ENCODE measurements at regions of chr20 and their contacts with region 1.

Region 1: DNA sequence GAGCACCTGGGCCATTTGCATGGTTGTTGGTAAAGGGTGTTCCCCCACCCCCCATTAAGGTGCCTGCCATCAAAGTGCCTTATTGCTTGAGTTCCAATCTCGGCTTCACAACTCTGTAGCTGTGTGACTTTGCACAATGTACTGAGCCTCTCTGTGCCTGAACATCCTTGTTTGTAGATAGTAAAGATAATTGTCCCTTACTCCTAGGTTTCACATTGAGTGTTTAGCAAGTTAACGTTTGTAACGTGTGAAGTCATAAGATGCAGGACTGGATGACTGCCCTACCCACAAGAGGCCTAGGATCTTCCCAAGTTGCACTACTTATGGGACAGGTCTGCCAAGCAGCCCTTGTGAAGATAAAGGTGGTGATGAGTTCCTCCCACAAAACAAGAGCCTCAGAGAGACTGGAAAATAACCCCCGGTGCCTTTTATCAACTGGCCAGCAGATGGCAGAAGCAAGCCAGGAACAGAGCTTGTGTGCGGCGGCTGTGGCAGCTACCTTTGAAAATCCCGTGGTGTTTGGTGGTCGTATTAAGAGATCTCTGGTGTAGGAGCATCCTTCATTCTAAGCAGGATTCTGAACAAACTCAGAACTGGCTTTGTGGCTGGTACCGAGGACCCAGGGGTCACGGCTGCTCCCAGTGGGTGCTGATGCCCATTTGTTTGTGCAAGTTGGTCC is 99.0 kb downstream of the CDH26 start:
- DNase-seq: peak; percentile 29 to 81 (median 56)
- ATAC-seq: peak; percentile 48 to 59 (median 55)
- H3K4me3 ChIP-seq: peak overlapping the region in 1 of 2 donors; percentile 27
- H3K4me3 Mint-ChIP-seq: peak overlapping the region; percentile 15 to 75 (median 39)
- H3K27ac ChIP-seq: peak overlapping the region; percentile 49
- H3K27ac Mint-ChIP-seq: peak overlapping the region; percentile 79 to 86
- H3K4me1 ChIP-seq: peaks cover 34 to 63% of the 10 kb centered on the region in 2 experiments
- H3K4me1 Mint-ChIP-seq: peaks cover 47 to 70% (median 54%) of the 10 kb centered on the region in 3 donors
- H3K27me3 ChIP-seq: no peaks in the 10 kb centered on the region
- H3K27me3 Mint-ChIP-seq: no peaks in the 10 kb centered on the region

Region 2: DNA sequence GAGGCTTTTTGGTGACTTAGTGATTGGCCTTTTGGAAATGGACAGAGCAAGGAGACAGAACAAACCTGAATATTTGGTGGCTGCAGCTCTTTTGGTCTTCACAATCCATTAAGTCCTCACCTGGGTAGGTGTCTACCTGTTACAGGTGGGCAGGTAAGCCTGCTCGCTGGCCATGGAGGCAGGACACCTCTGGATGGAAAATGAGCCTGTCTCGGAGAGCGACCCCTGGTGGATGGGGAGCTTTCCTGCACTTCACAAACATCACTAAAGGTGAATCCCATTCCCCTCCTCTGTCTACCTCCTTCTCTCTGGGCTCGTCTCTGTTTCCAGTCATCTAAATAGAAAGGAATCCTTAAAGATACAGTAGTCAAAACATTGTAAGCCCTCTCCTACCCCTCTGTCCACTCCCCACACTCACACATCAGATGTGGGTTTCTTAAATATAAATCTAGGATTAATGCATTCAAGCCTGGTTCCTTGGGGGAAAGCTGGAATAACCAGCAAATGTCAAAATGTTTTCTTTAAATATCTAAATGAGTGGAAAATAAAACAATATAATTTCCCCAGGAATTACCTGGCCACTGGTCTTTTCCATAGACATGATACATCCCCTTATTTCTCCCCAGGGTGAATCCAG is 205.8 kb after region 1 on chr20:
- CTCF ChIA-PET with region 1: interaction called, 4 to 35 read pairs
- POLR2A ChIA-PET with region 1: no interaction called
- DNase-seq: peak in 33 of 35 experiments; percentile 4 to 72 (median 42)
- ATAC-seq: peak in 1 of 4 experiments; percentile 38
- H3K4me3 ChIP-seq: no peak overlapping the region
- H3K4me3 Mint-ChIP-seq: no peak overlapping the region
- H3K27ac ChIP-seq: no peak overlapping the region
- H3K27ac Mint-ChIP-seq: no peak overlapping the region
- H3K4me1 ChIP-seq: peaks cover 10 to 18% of the 10 kb centered on the region in 2 experiments
- H3K4me1 Mint-ChIP-seq: peaks cover 18 to 27% (median 22%) of the 10 kb centered on the region in 3 donors
- H3K27me3 ChIP-seq: no peaks in the 10 kb centered on the region
- H3K27me3 Mint-ChIP-seq: no peaks in the 10 kb centered on the region

Region 3: DNA sequence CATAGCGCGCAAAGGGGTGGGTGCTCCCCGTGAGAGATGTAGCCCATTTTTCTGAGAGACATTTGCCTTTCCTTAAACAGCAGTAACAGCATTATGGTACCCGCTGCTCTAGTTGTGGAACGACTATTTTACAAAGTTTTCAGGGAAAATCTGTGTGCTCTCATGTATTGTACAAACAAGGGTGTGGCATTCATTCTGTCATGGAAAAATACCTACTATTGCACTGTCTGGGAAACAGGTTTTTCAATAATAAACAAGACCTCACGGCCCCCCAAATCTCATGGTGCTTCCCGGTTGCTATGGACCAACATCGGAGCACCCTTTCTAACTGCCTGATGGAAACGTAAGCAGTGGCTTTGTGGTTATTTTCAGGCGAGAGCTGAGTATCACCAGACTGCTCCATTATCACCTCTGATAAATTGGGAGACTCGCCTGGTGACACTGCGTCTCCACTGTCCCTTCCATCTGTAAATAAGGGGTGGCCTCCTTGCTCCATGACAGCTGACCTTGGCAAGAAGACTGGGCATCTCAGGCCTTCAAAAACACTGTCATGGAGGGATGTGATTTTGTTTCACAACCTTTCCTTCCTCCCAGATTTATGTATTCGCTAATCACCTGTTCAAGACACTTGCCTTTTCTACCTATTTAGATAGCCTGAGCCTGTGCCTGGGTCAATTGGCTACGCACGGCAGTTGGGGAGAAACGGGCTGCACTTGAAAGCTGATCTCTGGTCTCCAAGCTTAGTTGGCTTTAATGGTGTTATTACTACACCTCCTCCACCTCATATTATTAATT is 1176.9 kb after region 1 on chr20:
- CTCF ChIA-PET with region 1: interaction called, 3 to 13 read pairs
- POLR2A ChIA-PET with region 1: no interaction called
- DNase-seq: no peak
- ATAC-seq: no peak
- H3K4me3 ChIP-seq: no peak overlapping the region
- H3K4me3 Mint-ChIP-seq: no peak overlapping the region
- H3K27ac ChIP-seq: no peak overlapping the region
- H3K27ac Mint-ChIP-seq: no peak overlapping the region
- H3K4me1 ChIP-seq: no peaks in the 10 kb centered on the region
- H3K4me1 Mint-ChIP-seq: peaks cover 0 to 1% (median 0%) of the 10 kb centered on the region in 3 donors
- H3K27me3 ChIP-seq: peaks cover 0 to 13% of the 10 kb centered on the region in 2 experiments
- H3K27me3 Mint-ChIP-seq: peaks cover 3 to 7% of the 10 kb centered on the region in 2 donors

Measured in T-cell (primary cell).